SK-N-SH (cell line): ENCODE measurements at regions of chr17 and their contacts with region 1.

Region 1: DNA sequence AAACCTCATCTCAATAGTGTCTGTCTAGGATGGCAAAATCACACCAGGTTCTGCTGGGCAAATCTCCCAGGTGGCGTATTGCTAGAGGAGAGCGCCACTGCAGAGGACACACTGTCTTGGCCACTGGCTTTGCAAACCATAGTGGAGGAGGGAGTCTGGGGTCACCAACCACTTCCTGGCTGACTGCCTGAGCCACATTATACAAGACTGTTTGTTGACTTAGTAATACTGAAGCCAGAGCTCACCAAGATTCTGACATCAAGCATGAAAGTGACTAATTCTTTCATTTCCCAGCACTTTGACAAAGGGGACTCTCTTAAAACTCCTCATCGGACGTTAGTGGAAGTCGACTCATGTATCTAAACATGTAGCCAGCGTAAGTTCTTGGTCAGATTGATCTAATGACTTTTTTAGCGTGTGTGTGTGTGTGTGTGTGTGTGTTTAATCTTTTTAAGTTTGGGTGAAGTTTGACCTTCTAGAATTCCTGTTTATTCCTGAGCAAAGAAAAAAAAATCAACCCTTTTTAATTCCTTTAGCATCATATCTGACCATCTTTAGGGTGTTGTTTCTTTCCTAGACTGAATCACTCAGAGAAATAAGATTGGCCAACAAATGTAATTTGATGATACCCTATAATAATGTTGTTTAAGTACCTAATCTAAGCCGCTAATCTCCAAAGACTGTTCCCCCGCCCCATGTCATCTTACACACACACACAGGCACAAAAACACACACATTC is 13.7 kb downstream of the PITPNC1 start:
- DNase-seq: no peak
- H3K4me3 ChIP-seq: no peak overlapping the region
- H3K27ac ChIP-seq: peak overlapping the region in 1 of 2 experiments; percentile 93; a peak in 3 of 4 replicates
- H3K4me1 ChIP-seq: peaks cover 11 to 12% of the 10 kb centered on the region in 2 experiments
- H3K27me3 ChIP-seq: no peaks in the 10 kb centered on the region
- CTCF ChIP-seq: no peak; the same call in 1 of the 2 replicates
- EP300 ChIP-seq: peak in 1 of 2 experiments; percentile 67; a peak in 1 of 4 replicates
- RAD21 ChIP-seq: no peak

Region 2: GRCh38 chr17:67449845-67450755 is 59.3 kb after region 1 on chr17:
- CTCF ChIA-PET with region 1: interaction called, 11 read pairs
- POLR2A ChIA-PET with region 1: no interaction called
- DNase-seq: no peak
- H3K4me3 ChIP-seq: no peak overlapping the region
- H3K27ac ChIP-seq: no peak overlapping the region
- H3K4me1 ChIP-seq: peaks cover 0 to under 1% of the 10 kb centered on the region in 2 experiments; a peak in 2 of 4 replicates
- H3K27me3 ChIP-seq: no peaks in the 10 kb centered on the region
- CTCF ChIP-seq: no peak
- EP300 ChIP-seq: no peak
- RAD21 ChIP-seq: no peak

Region 3: GRCh38 chr17:67491009-67491680 is 100.3 kb after region 1 on chr17:
- CTCF ChIA-PET with region 1: interaction called, 23 read pairs
- POLR2A ChIA-PET with region 1: interaction called, 9 read pairs
- DNase-seq: peak; percentile 89
- H3K4me3 ChIP-seq: peak overlapping the region; percentile 35 to 44
- H3K27ac ChIP-seq: peak overlapping the region; percentile 84 to 92
- H3K4me1 ChIP-seq: peaks cover 12 to 35% of the 10 kb centered on the region in 2 experiments
- H3K27me3 ChIP-seq: no peaks in the 10 kb centered on the region
- CTCF ChIP-seq: no peak
- EP300 ChIP-seq: peak; percentile 80 to 97; a peak in 3 of 4 replicates
- RAD21 ChIP-seq: peak; percentile 33

Region 4: GRCh38 chr17:67629971-67630320 is 239.1 kb after region 1 on chr17:
- CTCF ChIA-PET with region 1: interaction called, 28 read pairs
- POLR2A ChIA-PET with region 1: no interaction called
- DNase-seq: peak; percentile 59
- H3K4me3 ChIP-seq: no peak overlapping the region
- H3K27ac ChIP-seq: peak overlapping the region in 1 of 2 experiments; percentile 40; a peak in 1 of 4 replicates
- H3K4me1 ChIP-seq: peaks cover 0 to 4% of the 10 kb centered on the region in 2 experiments; a peak in 1 of 4 replicates
- H3K27me3 ChIP-seq: no peaks in the 10 kb centered on the region
- CTCF ChIP-seq: peak; percentile 72
- EP300 ChIP-seq: no peak
- RAD21 ChIP-seq: peak; percentile 74

Region 5: GRCh38 chr17:67696853-67697505 is 306.2 kb after region 1 on chr17:
- CTCF ChIA-PET with region 1: interaction called, 10 read pairs
- POLR2A ChIA-PET with region 1: no interaction called
- DNase-seq: no peak
- H3K4me3 ChIP-seq: no peak overlapping the region
- H3K27ac ChIP-seq: 0 out of 4 replicates have a peak overlapping the region, but pooled peaks of 1 of the 2 experiments have one; percentile 4
- H3K4me1 ChIP-seq: no peaks in the 10 kb centered on the region
- H3K27me3 ChIP-seq: no peaks in the 10 kb centered on the region
- CTCF ChIP-seq: no peak
- EP300 ChIP-seq: no peak
- RAD21 ChIP-seq: no peak